Breast epithelium (tissue), 4 donors: ENCODE measurements at regions of chr7 and their contacts with region 1.

Region 1: GRCh38 chr7:12281038-12281437 is 69.9 kb downstream of the TMEM106B start:
- DNase-seq: no peak
- H3K4me3 ChIP-seq: no peak overlapping the region
- H3K27ac ChIP-seq: no peak overlapping the region
- H3K4me1 ChIP-seq: no peaks in the 10 kb centered on the region
- H3K27me3 ChIP-seq: no peaks in the 10 kb centered on the region
- CTCF ChIP-seq: no peak
- POLR2A ChIP-seq: no peak

Region 2: GRCh38 chr7:12069757-12070156 is 211.3 kb before region 1 on chr7:
- intact Hi-C with region 1: loop called (anchors 5 kb)
- DNase-seq: no peak
- H3K4me3 ChIP-seq: no peak overlapping the region
- H3K27ac ChIP-seq: no peak overlapping the region
- H3K4me1 ChIP-seq: no peaks in the 10 kb centered on the region
- H3K27me3 ChIP-seq: no peaks in the 10 kb centered on the region
- CTCF ChIP-seq: no peak
- POLR2A ChIP-seq: no peak

Region 3: GRCh38 chr7:13489386-13489785 is 1208.3 kb after region 1 on chr7:
- intact Hi-C with region 1: loop called (anchors 10 kb)
- DNase-seq: no peak
- H3K4me3 ChIP-seq: no peak overlapping the region
- H3K27ac ChIP-seq: no peak overlapping the region
- H3K4me1 ChIP-seq: no peaks in the 10 kb centered on the region
- H3K27me3 ChIP-seq: no peaks in the 10 kb centered on the region
- CTCF ChIP-seq: no peak
- POLR2A ChIP-seq: no peak